Sciatic nerve (tissue), 2 donors: ENCODE measurements at regions of chr13 and their contacts with region 1.

Region 1: DNA sequence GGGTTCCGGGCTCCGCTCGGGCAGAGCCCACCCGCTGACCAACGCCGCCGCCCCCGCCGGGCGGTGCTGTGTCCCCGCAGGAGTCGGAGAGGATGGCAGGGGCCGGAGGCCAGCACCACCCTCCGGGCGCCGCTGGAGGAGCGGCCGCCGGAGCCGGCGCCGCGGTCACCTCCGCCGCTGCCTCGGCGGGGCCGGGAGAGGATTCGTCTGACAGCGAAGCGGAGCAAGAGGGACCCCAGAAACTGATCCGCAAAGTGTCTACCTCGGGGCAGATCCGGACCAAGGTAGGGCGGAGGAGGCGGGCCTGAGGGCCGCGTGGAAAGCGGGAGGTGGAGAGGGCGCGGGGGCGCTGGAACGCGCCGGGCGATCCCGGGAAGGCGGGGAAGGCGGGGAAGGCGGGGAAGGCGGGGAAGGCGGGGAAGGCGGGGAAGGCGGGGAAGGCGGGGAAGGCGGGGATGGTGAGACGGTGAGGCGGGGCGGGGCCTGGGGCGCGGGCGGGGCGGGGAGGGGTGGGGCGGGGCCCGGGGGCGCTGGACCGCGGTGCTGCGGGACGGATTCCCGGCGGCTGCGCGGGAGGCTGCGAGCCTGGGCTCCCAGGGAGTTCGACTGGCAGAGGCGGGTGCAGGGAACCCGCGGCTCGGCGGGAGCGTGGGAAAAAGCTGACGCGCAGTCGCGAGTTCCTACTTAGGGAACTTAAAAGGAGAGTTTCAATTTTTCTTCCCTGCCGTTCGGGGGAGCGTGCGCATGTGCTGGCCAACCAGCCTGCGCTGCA is 420 bp downstream of the DGKH start:
- DNase-seq: peak; percentile 91
- ATAC-seq: peak; percentile 86

Region 2: DNA sequence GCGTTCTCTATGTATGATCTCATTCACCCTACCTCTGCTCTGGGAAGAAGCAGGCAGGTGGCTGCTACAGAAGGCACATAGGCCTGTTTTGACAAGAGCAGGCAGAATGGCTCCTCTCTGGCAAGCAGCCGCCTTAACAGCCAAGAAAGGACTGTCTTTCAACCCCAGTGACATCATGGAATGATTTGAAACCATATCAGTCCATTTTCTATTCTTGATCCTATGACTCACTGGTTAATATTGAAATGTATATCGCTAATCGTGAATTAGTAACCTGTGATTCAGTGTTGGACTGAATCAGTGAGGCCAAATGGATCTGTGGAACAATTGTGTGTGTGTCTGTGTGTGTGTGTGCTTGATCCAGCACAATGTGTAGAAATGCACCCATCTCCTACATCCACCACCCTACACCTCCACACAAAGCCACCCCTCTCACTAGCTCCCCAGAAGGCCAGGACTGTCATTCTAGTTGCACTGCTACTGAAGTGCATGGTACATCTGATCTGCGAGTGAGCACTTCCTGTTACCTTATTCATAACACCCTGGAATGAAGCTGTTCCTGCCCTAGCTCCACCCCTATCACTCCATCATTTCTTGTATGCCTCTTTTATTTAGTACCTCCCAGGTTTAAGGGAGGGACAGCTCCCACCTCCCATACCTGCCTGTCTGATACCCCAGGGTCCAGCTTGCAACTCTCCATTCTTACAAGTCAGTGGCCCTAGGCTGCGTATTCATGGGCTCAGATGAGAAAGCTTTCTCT is 1842.4 kb before region 1 on chr13:
- intact Hi-C with region 1: no loop called
- DNase-seq: no peak
- ATAC-seq: peak; percentile 31

Region 3: DNA sequence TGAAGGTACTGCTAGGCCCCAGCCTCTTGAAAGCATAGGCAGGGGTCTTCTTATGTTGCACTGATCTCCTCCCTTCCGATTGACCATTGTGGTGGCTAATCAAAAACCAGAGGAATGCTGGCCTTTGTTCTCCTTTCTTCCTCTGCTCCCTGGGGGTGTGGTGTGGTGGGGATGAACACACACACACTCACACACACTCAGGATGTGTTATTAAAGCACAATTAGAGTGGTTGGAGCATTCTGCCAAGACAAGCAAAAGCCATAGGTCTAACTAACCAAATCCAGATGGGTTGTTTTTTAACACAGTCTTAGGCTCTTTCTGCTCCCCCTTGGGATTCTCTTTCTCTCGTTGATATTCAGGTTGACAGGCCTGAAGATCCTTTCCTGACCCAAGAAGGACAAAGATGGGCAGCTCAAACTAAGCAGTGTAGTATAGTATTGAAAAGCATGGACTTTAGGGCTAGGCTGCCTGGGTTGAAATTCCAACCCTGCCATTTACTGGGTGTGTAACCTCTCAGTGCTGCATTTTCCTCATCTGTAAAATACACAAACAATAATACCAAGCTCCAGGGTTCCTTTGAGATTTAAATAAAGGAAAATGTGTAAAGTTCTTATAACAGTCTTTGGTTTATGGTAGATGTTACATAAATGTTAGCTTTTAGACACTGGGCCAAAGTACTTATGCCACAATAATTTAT is 25.9 kb before region 1 on chr13:
- intact Hi-C with region 1: loop called (anchors 1 kb)
- DNase-seq: no peak
- ATAC-seq: no peak

Region 4: DNA sequence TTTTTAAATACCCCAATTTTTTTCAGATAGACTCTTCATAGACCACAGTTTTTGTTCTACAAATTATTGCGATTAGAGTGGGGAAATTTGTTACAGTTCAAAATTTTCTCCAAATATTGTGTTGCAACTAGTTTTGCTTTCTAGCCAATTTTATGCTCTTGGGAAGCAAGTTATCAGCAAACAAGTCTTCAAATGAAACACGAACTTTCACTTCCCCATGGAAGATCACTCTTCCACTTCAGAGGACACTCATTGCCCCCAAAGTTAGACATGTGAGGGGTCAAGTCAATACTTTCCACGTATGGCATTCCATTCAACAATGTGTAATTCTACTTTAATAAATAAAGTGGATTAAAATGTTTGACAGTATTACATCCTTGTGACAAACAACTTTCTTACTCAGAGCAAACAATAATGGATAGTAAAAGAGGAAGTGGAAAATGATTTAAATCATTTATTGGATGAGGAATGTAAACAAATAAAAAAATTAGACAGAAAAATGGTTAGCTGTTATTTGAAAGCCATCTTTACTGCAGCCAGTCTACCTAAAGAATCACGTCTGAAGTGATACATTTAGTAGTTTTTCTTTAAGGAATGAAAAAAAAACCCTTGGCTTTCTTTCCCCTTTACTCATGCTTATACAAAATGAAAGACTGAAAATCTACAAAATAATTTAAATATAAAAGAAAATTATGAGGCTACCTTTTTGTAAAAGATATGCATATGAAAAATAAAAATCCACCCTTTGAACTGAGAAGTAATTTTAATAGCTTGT is 483.9 kb after region 1 on chr13:
- intact Hi-C with region 1: no loop called
- DNase-seq: no peak
- ATAC-seq: peak; percentile 36